ENCODE measurements at regions of chr12 and their contacts with region 1.

Region 1: GRCh38 chr12:48758221-48758620 is 30.7 kb downstream of the ADCY6 start:
- DNase-seq: no peak

Region 2: GRCh38 chr12:48795480-48796455 is 37.5 kb after region 1 on chr12:
- intact Hi-C with region 1: loop called (anchors 2 kb)
- DNase-seq: peak in 41 of 42 donors; percentile 43 to 93 (median 79)

Region 3: DNA sequence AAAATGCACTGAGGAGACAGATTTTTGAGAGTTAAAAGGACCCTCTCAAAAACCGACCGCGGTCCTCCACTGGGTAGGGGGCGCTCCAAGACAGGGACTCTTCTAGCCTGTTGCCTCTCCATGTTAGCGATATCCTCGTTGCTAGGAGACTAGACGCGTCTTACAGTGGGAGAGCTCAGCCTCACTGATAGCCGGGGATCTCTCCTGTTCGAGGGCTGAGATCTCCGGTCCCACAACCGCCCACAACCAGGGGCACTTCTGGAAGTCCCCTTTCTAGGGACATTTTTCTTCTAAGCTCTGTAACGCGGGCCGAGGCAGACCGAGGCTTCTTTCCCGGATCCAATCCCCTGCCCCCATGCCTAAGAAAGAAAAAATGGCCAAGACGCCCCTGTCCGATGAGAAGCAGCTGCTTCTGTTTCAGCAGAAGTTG is 145.8 kb after region 1 on chr12:
- intact Hi-C with region 1: no loop called
- DNase-seq: peak; percentile 67 to 94 (median 81)

Measured in head of caudate nucleus (tissue), 42 donors.